ENCODE measurements at regions of chr6 and their contacts with region 1.

Region 1: GRCh38 chr6:169723200-169723909 is 945 bp downstream of the PHF10 start:
- DNase-seq: peak; percentile 61 to 80
- ATAC-seq: peak; percentile 71 to 75
- H3K4me3 ChIP-seq: peak overlapping the region; percentile 57 to 83 (median 65)
- H3K27ac ChIP-seq: peak overlapping the region; percentile 75 to 98 (median 86)
- H3K4me1 ChIP-seq: peaks cover 37 to 44% of the 10 kb centered on the region in 2 donors
- H3K27me3 ChIP-seq: no peaks in the 10 kb centered on the region
- CTCF ChIP-seq: no peak
- POLR2A ChIP-seq: peak in 1 of 2 donors; percentile 21

Region 2: DNA sequence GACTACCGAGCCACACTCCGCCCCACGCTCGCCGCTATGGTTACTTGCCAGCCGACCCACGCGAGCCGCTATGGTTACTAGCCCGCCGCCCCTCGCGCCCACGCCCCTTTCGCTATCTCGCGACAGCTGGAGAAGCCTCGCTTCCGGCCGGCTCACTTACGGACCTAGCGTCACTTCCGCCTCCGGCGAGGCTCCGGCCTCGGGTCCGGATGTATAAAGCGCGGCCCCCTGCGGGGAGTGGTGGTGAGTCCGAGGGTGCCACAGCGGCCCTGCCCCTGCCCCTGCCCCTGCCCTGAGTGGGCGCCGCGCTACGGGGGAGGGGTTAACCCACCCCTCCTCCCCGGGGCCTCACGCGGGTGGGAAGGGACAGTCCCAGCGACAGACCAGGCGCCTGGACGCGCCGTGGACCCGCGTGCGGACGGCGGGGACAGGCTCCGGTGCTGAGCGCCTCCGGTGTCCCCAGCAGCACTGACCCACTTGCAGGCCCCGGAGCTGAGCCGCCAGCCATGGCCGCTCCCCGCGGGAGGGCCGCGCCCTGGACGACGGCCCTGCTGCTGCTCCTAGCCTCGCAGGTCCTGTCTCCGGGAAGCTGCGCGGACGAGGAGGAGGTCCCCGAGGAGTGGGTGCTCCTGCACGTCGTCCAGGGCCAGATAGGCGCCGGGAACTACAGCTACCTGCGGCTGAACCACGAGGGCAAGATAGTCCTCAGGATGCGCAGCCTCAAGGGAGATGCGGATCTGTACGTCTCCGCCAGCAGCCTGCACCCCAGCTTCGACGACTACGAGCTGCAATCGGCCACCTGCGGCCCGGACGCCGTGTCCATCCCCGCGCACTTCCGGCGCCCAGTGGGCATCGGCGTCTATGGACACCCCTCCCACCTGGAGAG is 21.2 kb before region 1 on chr6 and contains the starts of genes C6orf120 and WDR27:
- in situ Hi-C with region 1: no loop called
- intact Hi-C with region 1: loop called (anchors 1 kb)
- DNase-seq: peak; percentile 88 to 92
- ATAC-seq: peak; percentile 92 to 95
- H3K4me3 ChIP-seq: peak within 1 kb of the TSS; percentile 88 to 93 (median 90)
- H3K27ac ChIP-seq: peak within 1 kb of the TSS; percentile 87 to 97 (median 95)
- H3K4me1 ChIP-seq: peaks cover 36 to 51% of the 10 kb centered on the region in 2 donors
- H3K27me3 ChIP-seq: no peaks in the 10 kb centered on the region
- CTCF ChIP-seq: no peak
- POLR2A ChIP-seq: peak; percentile 92 to 94
- total RNA-seq, gene C6orf120: 23.8 to 41.4 (median 29.4) TPM
- total RNA-seq, gene WDR27: 2.8 to 31.6 (median 4.0) TPM

Region 3: GRCh38 chr6:169751242-169752073 is 28.1 kb after region 1 on chr6 and contains the starts of genes DYNLT2 and ERMARD:
- in situ Hi-C with region 1: no loop called
- intact Hi-C with region 1: loop called (anchors 1 kb)
- DNase-seq: peak; percentile 85 to 93
- ATAC-seq: peak; percentile 97 to 98
- H3K4me3 ChIP-seq: peak within 1 kb of the TSS; percentile 64 to 81 (median 70)
- H3K27ac ChIP-seq: peak within 1 kb of the TSS; percentile 91 to 94 (median 92)
- H3K4me1 ChIP-seq: peaks cover 20% of the 10 kb centered on the region in 2 donors
- H3K27me3 ChIP-seq: no peaks in the 10 kb centered on the region
- CTCF ChIP-seq: peak; percentile 39 to 59 (median 47)
- POLR2A ChIP-seq: peak; percentile 81 to 89
- total RNA-seq, gene DYNLT2: 0.23 to 1.1 (median 0.46) TPM
- total RNA-seq, gene ERMARD: 9.0 to 18.9 (median 11.2) TPM

Region 4: GRCh38 chr6:170129691-170130171 is 406.4 kb after region 1 on chr6:
- in situ Hi-C with region 1: no loop called
- intact Hi-C with region 1: no loop called
- DNase-seq: peak; percentile 53 to 73
- ATAC-seq: peak; percentile 60 to 64
- H3K4me3 ChIP-seq: no peak overlapping the region
- H3K27ac ChIP-seq: peak overlapping the region; percentile 38 to 73 (median 51)
- H3K4me1 ChIP-seq: peaks cover 30 to 33% of the 10 kb centered on the region in 2 donors
- H3K27me3 ChIP-seq: no peaks in the 10 kb centered on the region
- CTCF ChIP-seq: no peak
- POLR2A ChIP-seq: no peak

Region 5: DNA sequence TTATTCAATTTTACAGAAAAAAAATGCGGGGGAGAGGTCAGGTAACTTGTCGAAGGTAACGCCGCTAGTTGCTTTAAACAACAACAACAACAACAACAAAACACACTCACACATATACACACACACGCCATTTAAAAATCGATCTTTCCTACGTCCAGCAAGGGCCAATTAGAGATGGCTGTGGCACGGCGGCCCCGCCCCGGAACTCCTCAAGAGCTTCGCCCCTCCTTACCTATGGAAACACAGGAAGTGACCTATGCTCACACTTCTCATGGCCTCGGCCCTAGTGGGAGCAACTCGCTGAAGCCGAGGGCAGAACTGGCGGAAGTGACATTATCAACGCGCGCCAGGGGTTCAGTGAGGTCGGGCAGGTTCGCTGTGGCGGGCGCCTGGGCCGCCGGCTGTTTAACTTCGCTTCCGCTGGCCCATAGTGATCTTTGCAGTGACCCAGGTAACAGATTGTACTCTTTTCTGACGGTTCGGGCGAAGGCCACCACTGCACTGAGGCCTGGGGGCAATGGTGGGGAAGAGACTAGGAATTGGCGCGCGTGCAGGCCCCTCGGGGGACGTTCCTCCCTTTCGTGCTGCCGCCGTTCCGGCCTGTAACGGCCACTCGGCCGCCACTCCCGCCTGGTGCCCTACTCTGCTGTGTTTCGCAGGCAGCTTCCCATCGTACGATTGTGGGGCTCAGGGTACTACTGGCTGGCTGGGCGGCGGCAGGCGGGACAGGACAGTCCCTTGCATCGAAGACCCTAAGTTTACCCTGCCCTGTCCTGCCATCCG is 830.8 kb after region 1 on chr6 and contains the start of gene TBP:
- in situ Hi-C with region 1: no loop called
- intact Hi-C with region 1: loop called (anchors 10 kb)
- DNase-seq: peak; percentile 98 to 99
- ATAC-seq: peak; percentile 91 to 92
- H3K4me3 ChIP-seq: peak within 1 kb of the TSS; percentile 75 to 95 (median 80)
- H3K27ac ChIP-seq: peak within 1 kb of the TSS; percentile 93 to 98 (median 94)
- H3K4me1 ChIP-seq: peaks cover 45 to 51% of the 10 kb centered on the region in 2 donors
- H3K27me3 ChIP-seq: no peaks in the 10 kb centered on the region
- CTCF ChIP-seq: no peak
- POLR2A ChIP-seq: peak; percentile 37 to 71
- total RNA-seq, gene TBP: 9.7 to 17.3 (median 15.3) TPM